Naive thymus-derived CD4-positive, alpha-beta T cell (primary cell): ENCODE measurements at regions of chr22 and their contacts with region 1.

Region 1: DNA sequence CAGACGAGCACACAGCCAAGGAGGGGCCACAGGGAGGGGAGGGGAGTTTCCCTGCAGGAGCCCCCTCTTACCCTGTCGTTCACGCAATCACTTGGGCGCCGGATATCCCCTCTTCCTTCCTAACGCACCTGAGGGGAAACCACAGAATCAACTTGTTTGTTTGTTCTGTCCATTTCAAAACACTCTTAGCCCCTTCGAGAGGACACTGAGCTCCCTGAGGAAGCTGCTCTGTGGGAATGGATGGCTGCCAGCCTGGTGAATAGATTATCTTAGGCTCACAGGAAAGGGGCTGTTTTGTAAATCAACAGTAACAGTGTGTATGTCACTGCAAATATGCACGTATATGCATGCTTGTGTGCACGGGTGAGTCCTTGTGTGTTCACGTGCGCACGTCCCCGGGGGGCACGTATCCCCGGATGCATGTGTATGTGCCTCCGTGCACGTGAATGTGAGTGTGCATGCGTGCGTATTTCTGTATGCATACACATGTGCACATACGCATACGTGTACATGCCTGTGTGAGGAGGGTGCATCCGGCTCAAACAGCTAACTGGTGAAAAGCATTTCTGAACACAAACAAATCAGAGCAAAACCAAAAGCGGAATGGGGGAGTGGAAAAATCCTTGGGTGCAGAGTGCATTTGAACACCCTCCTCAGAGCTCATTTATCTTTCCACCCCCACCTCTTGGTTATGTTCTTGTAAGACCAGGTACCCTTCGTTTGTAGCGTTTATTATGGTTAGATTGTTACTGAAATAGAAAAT is 7.2 kb downstream of the ARSA start:
- DNase-seq: peak; percentile 61 to 95 (median 88)
- ATAC-seq: peak; percentile 88
- H3K4me3 ChIP-seq: peak overlapping the region; percentile 68
- H3K4me3 Mint-ChIP-seq: peak overlapping the region; percentile 81 to 97 (median 93)
- H3K27ac ChIP-seq: peak overlapping the region; percentile 93
- H3K27ac Mint-ChIP-seq: peak overlapping the region; percentile 93 to 100 (median 99)
- H3K4me1 ChIP-seq: peaks cover 17 to 27% of the 10 kb centered on the region in 2 donors
- H3K4me1 Mint-ChIP-seq: peaks cover 10 to 40% (median 33%) of the 10 kb centered on the region in 7 donors
- H3K27me3 ChIP-seq: no peaks in the 10 kb centered on the region
- H3K27me3 Mint-ChIP-seq: no peaks in the 10 kb centered on the region

Region 2: GRCh38 chr22:50185384-50186087 is 435.2 kb before region 1 on chr22 and contains the start of gene TRABD:
- CTCF ChIA-PET with region 1: no interaction called
- POLR2A ChIA-PET with region 1: interaction called, 20 read pairs
- intact Hi-C with region 1: loop called in 1 of 2 experiments (anchors 2 kb)
- DNase-seq: peak; percentile 76 to 89 (median 86)
- ATAC-seq: peak; percentile 87
- H3K4me3 ChIP-seq: peak within 1 kb of the TSS; percentile 83
- H3K4me3 Mint-ChIP-seq: peak within 1 kb of the TSS; percentile 88 to 98 (median 94)
- H3K27ac ChIP-seq: peak within 1 kb of the TSS; percentile 78
- H3K27ac Mint-ChIP-seq: peak within 1 kb of the TSS; percentile 82 to 98 (median 96)
- H3K4me1 ChIP-seq: peaks cover 28 to 32% of the 10 kb centered on the region in 2 donors
- H3K4me1 Mint-ChIP-seq: peaks cover 10 to 37% (median 23%) of the 10 kb centered on the region in 7 donors
- H3K27me3 ChIP-seq: no peaks in the 10 kb centered on the region
- H3K27me3 Mint-ChIP-seq: peaks cover 0 to 6% (median 0%) of the 10 kb centered on the region in 5 donors
- total RNA-seq, gene TRABD: 106 to 157 (median 124) TPM

Region 3: DNA sequence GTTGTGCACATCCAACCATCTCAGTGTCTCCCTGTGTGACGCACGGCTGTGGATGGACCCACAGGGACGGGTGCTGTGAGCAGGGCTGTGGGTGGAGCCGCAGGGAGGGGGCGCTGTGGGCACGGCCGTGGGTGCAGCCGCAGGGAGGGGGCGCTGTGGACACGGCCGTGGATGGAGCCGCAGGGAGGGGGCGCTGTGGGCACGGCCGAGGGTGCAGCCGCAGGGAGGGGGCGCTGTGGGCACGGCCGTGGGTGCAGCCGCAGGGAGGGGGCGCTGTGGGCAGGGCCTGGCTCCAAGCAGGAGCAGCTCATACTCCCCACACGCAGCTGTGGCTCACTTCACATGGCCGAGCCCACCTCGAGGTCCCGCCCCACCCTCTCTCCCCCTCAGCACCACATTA is 344.6 kb before region 1 on chr22:
- CTCF ChIA-PET with region 1: interaction called, 3 read pairs
- POLR2A ChIA-PET with region 1: interaction called, 8 read pairs
- intact Hi-C with region 1: loop called in 1 of 2 experiments (anchors 2 kb)
- DNase-seq: peak in 2 of 9 donors; percentile 22 to 27
- ATAC-seq: peak; percentile 86
- H3K4me3 ChIP-seq: no peak overlapping the region
- H3K4me3 Mint-ChIP-seq: no peak overlapping the region
- H3K27ac ChIP-seq: no peak overlapping the region
- H3K27ac Mint-ChIP-seq: no peak overlapping the region
- H3K4me1 ChIP-seq: peaks cover 3 to 4% of the 10 kb centered on the region in 2 donors
- H3K4me1 Mint-ChIP-seq: peaks cover 0 to 12% (median 5%) of the 10 kb centered on the region in 7 donors
- H3K27me3 ChIP-seq: no peaks in the 10 kb centered on the region
- H3K27me3 Mint-ChIP-seq: peaks cover 0 to 12% (median 0%) of the 10 kb centered on the region in 5 donors

Region 4: GRCh38 chr22:50469377-50470305 is 151.1 kb before region 1 on chr22:
- CTCF ChIA-PET with region 1: interaction called, 6 read pairs
- POLR2A ChIA-PET with region 1: interaction called, 15 read pairs
- intact Hi-C with region 1: loop called (anchors 1 kb)
- DNase-seq: peak; percentile 77 to 96 (median 92)
- ATAC-seq: peak; percentile 95
- H3K4me3 ChIP-seq: peak overlapping the region; percentile 65
- H3K4me3 Mint-ChIP-seq: peak overlapping the region; percentile 76 to 100 (median 90)
- H3K27ac ChIP-seq: peak overlapping the region; percentile 90
- H3K27ac Mint-ChIP-seq: peak overlapping the region; percentile 88 to 99 (median 93)
- H3K4me1 ChIP-seq: peaks cover 53 to 57% of the 10 kb centered on the region in 2 donors
- H3K4me1 Mint-ChIP-seq: peaks cover 45 to 69% (median 61%) of the 10 kb centered on the region in 7 donors
- H3K27me3 ChIP-seq: no peaks in the 10 kb centered on the region
- H3K27me3 Mint-ChIP-seq: no peaks in the 10 kb centered on the region

Region 5: DNA sequence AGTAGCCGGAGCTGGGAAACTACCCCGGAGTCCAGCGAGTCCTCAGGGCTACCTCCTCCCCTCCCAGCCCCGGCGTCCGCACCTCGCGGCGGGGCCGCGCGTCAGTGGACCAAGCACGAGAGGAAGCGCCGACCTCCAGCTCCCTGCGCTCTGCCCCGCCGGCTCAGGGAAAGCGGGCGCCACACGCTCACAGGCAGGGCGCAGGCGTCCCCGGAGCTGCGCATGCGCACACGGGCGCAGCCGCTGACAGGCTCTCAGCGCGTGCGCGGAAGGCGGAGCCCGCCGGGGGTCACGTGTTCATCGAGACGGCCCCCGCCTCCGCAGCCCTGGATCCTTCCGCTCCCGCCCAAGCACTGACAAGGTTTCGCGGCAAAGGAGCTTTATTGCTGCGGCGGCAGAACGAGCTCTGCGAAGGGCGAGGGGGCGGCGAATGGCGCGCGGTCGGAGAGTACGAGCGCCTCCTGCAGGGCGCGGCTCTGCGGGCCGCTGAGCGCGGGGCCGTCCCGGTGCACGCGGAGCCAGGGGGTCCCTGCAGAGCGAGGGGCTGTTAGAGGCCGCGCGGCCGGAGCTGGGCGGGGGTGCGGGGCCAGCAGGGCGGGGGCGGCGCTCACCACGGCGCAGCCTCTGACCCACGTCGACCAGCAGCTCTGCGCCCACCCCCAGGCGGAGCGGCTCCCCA is 95.2 kb before region 1 on chr22 and contains the start of gene SCO2:
- CTCF ChIA-PET with region 1: interaction called, 27 read pairs
- POLR2A ChIA-PET with region 1: interaction called, 91 read pairs
- intact Hi-C with region 1: loop called (anchors 1 kb)
- DNase-seq: peak; percentile 97 to 99 (median 98)
- ATAC-seq: peak; percentile 77
- H3K4me3 ChIP-seq: peak within 1 kb of the TSS; percentile 77
- H3K4me3 Mint-ChIP-seq: peak within 1 kb of the TSS; percentile 77 to 96 (median 89)
- H3K27ac ChIP-seq: peak within 1 kb of the TSS; percentile 87
- H3K27ac Mint-ChIP-seq: peak within 1 kb of the TSS; percentile 78 to 93 (median 86)
- H3K4me1 ChIP-seq: peaks cover 14 to 21% of the 10 kb centered on the region in 2 donors
- H3K4me1 Mint-ChIP-seq: peaks cover 8 to 33% (median 26%) of the 10 kb centered on the region in 7 donors
- H3K27me3 ChIP-seq: no peaks in the 10 kb centered on the region
- H3K27me3 Mint-ChIP-seq: peaks cover 0 to 6% (median 0%) of the 10 kb centered on the region in 5 donors
- total RNA-seq, gene SCO2: 2.2 to 12.0 (median 5.5) TPM

Region 6: GRCh38 chr22:50562523-50563412 is 58.0 kb before region 1 on chr22 and contains the start of gene SYCE3:
- CTCF ChIA-PET with region 1: interaction called, 9 read pairs
- POLR2A ChIA-PET with region 1: interaction called, 10 read pairs
- intact Hi-C with region 1: loop called in 1 of 2 experiments (anchors 1 kb)
- DNase-seq: peak; percentile 92 to 99 (median 96)
- ATAC-seq: peak; percentile 100
- H3K4me3 ChIP-seq: peak within 1 kb of the TSS; percentile 75
- H3K4me3 Mint-ChIP-seq: peak within 1 kb of the TSS; percentile 85 to 97 (median 94)
- H3K27ac ChIP-seq: peak within 1 kb of the TSS; percentile 67
- H3K27ac Mint-ChIP-seq: peak within 1 kb of the TSS; percentile 77 to 96 (median 87)
- H3K4me1 ChIP-seq: peaks cover 0 to 4% of the 10 kb centered on the region in 2 donors
- H3K4me1 Mint-ChIP-seq: peaks cover 6 to 24% (median 14%) of the 10 kb centered on the region in 7 donors
- H3K27me3 ChIP-seq: no peaks in the 10 kb centered on the region
- H3K27me3 Mint-ChIP-seq: peaks cover 0 to 14% (median 0%) of the 10 kb centered on the region in 5 donors
- total RNA-seq, gene SYCE3: not detected